OCI-LY7 (cell line): ENCODE measurements at regions of chr4 and their contacts with region 1.

Region 1: DNA sequence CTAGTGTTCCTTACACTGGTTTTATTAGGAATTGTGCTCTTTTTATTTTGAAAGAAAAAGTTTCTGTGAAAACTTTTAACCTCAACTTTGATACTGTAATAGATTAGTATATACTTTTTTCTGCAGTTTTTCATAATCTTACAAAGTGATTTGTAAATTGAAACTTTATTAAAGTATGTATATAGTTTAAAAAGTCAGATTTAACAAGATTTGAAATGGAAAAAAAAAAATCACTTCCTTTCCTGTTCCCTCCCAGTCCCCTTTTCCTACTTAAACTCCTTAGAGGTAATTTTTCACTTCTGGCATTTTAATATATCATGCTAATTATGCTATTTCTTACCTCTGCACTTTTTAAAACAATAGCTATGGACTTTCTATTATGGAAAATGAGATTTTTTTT is 49.3 kb downstream of the PAQR3 start:
- DNase-seq: no peak
- H3K4me3 ChIP-seq: no peak overlapping the region
- H3K27ac ChIP-seq: no peak overlapping the region
- H3K4me1 ChIP-seq: no peaks in the 10 kb centered on the region
- CTCF ChIP-seq: no peak

Region 2: GRCh38 chr4:77681792-77682191 is 1208.2 kb before region 1 on chr4:
- CTCF ChIA-PET with region 1: no interaction called
- POLR2A ChIA-PET with region 1: no interaction called
- intact Hi-C with region 1: no loop called
- DNase-seq: no peak
- H3K4me3 ChIP-seq: no peak overlapping the region
- H3K27ac ChIP-seq: no peak overlapping the region
- H3K4me1 ChIP-seq: no peaks in the 10 kb centered on the region
- CTCF ChIP-seq: no peak

Region 3: GRCh38 chr4:78379991-78380729 is 509.8 kb before region 1 on chr4:
- CTCF ChIA-PET with region 1: no interaction called
- POLR2A ChIA-PET with region 1: no interaction called
- intact Hi-C with region 1: no loop called
- DNase-seq: no peak
- H3K4me3 ChIP-seq: no peak overlapping the region
- H3K27ac ChIP-seq: no peak overlapping the region
- H3K4me1 ChIP-seq: no peaks in the 10 kb centered on the region
- CTCF ChIP-seq: no peak

Region 4: GRCh38 chr4:78876568-78877320 is 13.2 kb before region 1 on chr4:
- CTCF ChIA-PET with region 1: no interaction called
- POLR2A ChIA-PET with region 1: interaction called, 12 read pairs
- intact Hi-C with region 1: no loop called
- DNase-seq: peak; percentile 34
- H3K4me3 ChIP-seq: no peak overlapping the region
- H3K27ac ChIP-seq: no peak overlapping the region
- H3K4me1 ChIP-seq: peaks cover 13% of the 10 kb centered on the region
- CTCF ChIP-seq: no peak